AG04450 (cell line): ENCODE measurements at regions of chr7 and their contacts with region 1.

Region 1: GRCh38 chr7:131040467-131040932 is 287.2 kb upstream of the MKLN1 start:
- DNase-seq: peak; percentile 48
- H3K4me3 ChIP-seq: no peak overlapping the region
- H3K27ac ChIP-seq: no peak overlapping the region
- H3K27me3 ChIP-seq: no peaks in the 10 kb centered on the region
- CTCF ChIP-seq: peak; percentile 94

Region 2: GRCh38 chr7:130887182-130888016 is 153.1 kb before region 1 on chr7:
- CTCF ChIA-PET with region 1: interaction called, 14 read pairs
- POLR2A ChIA-PET with region 1: interaction called, 4 read pairs
- DNase-seq: no peak
- H3K4me3 ChIP-seq: peak overlapping the region; percentile 18; the same call in 1 of the 2 replicates
- H3K27ac ChIP-seq: peak overlapping the region; percentile 93
- H3K27me3 ChIP-seq: no peaks in the 10 kb centered on the region
- CTCF ChIP-seq: no peak

Region 3: DNA sequence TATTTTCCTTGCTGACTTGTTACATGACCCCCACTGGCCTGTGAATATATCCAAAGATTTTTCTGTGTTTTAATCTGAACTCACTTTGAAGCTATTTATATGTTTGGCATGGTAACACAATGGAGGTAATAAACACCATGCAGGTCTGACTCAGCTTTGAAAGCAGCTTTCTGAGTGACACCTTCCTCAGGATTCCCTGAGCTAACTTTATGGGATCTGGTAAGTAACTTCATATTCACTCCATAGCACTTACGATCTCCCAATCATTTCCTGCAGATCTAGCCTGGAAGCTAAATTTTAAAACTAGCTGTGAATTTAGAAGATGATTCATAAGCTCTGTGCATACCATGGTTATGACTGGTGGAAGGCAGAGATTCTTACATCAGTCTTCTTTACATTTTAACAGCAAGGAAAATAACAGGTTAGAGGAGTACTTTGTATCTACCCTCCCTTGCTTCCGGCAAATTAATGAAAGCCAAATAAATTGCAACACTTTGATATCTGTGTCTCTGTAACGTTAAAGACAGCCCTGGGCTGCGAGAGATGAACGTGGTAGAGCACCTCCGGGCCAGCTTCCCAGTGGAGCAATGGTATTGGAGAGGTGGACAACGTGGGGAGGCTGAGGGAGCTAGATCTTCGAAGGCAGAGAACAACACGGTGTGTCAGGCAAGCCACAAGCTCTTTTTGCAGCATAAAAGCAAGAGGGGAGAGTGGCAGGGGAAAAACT is 136.3 kb before region 1 on chr7:
- CTCF ChIA-PET with region 1: interaction called, 91 read pairs
- POLR2A ChIA-PET with region 1: interaction called, 4 read pairs
- DNase-seq: peak; percentile 64
- H3K4me3 ChIP-seq: peak overlapping the region; percentile 34
- H3K27ac ChIP-seq: peak overlapping the region; percentile 95
- H3K27me3 ChIP-seq: no peaks in the 10 kb centered on the region
- CTCF ChIP-seq: no peak

Region 4: DNA sequence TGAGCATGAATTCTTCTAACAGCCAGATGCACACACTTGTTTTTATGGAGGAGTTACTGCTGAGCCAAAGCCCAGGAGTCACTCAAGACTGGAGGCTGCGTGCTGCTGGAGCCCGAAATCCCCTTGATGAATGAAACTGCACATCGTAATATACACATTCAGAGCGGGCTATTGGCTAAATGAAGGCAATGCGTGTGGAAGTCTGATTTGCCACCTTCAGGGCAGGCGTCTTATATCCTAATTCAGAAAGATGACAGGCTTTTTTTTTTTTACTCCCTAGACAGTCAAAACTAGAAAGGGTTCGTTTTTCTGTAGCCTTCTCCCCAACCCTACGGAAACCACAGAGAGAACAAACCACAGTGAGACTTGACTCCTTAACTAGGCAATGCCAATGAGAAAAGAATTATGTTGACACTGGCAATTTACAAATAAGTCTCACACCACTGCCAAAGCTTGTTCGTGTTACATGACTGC is 79.3 kb before region 1 on chr7:
- CTCF ChIA-PET with region 1: interaction called, 12 read pairs
- POLR2A ChIA-PET with region 1: no interaction called
- DNase-seq: no peak
- H3K4me3 ChIP-seq: peak overlapping the region; percentile 26
- H3K27ac ChIP-seq: peak overlapping the region; percentile 97
- H3K27me3 ChIP-seq: no peaks in the 10 kb centered on the region
- CTCF ChIP-seq: no peak

Region 5: GRCh38 chr7:131016230-131016629 is 24.3 kb before region 1 on chr7:
- CTCF ChIA-PET with region 1: interaction called, 10 read pairs
- POLR2A ChIA-PET with region 1: no interaction called
- DNase-seq: no peak
- H3K4me3 ChIP-seq: no peak overlapping the region
- H3K27ac ChIP-seq: no peak overlapping the region
- H3K27me3 ChIP-seq: no peaks in the 10 kb centered on the region
- CTCF ChIP-seq: no peak

Region 6: GRCh38 chr7:131057015-131057793 is 16.7 kb after region 1 on chr7:
- CTCF ChIA-PET with region 1: interaction called, 20 read pairs
- POLR2A ChIA-PET with region 1: no interaction called
- DNase-seq: peak; percentile 81
- H3K4me3 ChIP-seq: no peak overlapping the region
- H3K27ac ChIP-seq: peak overlapping the region; percentile 80
- H3K27me3 ChIP-seq: no peaks in the 10 kb centered on the region
- CTCF ChIP-seq: no peak

Region 7: DNA sequence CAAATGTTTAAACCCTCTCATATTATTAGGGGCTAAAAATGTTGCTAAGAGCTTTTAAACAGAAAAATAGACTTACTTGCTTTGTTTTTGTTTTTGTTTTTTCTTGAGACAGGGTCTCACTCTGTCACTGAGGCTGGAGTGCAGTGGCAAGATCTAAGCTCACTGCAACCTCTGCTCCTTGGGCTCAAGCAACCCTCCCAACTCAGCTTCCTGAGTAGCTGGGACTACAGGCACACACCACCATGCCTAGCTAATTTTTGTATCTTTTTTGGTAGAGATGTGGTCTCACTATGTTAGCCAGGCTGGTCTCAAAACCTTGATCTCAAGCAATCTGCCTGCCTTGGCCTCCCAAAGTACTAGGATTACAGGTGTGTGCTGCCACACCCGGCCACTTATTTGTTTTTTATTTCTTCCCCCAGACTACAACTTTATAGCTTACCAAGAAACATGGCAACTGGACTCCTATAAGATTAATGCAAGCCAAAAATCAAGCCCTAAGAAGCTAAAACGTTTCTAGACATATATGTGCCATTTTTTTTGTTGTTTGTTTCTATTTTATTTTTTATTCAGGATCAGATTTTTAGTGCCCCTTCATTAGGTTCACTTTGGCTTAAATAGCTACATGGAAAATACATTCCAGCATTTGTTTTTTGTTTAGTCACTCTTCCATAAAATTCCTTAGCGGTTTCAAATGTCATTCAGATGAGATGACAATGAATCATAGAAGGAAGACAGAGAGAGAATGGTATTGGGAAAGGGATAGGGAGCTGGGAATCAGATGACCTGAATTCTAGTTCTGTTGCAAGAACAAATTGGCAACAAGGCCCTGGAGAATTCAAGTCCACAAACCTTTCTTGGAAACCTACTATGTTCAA is 123.8 kb after region 1 on chr7:
- CTCF ChIA-PET with region 1: no interaction called
- POLR2A ChIA-PET with region 1: no interaction called
- DNase-seq: no peak
- H3K4me3 ChIP-seq: no peak overlapping the region
- H3K27ac ChIP-seq: no peak overlapping the region
- H3K27me3 ChIP-seq: no peaks in the 10 kb centered on the region
- CTCF ChIP-seq: no peak